CD8-positive, alpha-beta memory T cell (primary cell): ENCODE measurements at regions of chr12 and their contacts with region 1.

Region 1: DNA sequence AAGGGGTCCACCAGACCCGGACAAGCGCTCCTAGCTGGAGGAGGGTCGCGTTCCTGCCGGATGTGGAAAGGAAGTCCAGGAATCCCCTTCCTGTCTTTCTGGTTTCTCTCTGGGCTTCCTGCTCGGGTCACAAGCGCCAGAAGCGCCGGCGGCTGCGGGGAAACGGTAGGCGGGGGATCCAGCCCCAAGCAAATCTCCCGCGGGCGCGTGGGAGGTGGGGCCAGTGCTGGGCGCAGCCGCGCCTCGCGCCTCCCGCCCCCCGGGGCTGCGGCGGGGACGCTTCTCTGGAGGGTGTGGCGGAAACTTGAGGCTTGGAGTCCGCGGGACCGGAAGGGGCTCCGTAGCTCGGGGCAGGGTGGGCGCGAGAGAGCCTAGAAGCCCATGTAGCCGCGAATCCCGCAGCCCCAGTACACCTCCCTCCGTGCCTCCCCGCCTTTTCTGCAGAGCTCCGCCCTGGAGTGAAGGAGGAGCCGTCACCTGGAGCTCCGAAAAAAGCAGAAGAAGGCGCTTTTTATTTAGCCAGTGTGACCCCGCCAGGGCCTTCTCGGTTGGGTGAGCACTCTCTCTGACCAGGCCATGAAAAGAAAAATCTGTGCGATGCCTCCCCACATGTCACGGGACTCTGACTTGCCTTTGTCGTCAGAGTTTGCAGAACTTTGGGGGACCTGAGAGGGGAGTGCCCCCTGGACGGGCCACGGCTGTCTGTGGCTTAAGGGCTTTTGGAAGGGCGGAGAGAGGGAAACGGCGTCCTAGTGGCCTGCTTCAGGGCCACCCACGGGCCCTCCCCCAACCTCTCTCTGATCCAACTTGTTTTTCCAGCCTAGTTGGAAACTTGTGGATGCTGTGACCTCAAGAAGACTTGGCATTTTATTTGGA is 21.4 kb upstream of the CLEC2D start:
- DNase-seq: peak; percentile 86 to 97 (median 95)
- H3K4me3 ChIP-seq: peak overlapping the region; percentile 92
- H3K4me3 Mint-ChIP-seq: peak overlapping the region; percentile 85 to 99 (median 96)
- H3K27ac ChIP-seq: peak overlapping the region; percentile 93
- H3K27ac Mint-ChIP-seq: peak overlapping the region; percentile 90 to 99 (median 98)
- H3K4me1 ChIP-seq: peaks cover 50% of the 10 kb centered on the region
- H3K4me1 Mint-ChIP-seq: peaks cover 54 to 71% (median 69%) of the 10 kb centered on the region in 3 donors
- H3K27me3 ChIP-seq: no peaks in the 10 kb centered on the region
- H3K27me3 Mint-ChIP-seq: peaks cover 0 to 7% of the 10 kb centered on the region in 2 donors

Region 2: DNA sequence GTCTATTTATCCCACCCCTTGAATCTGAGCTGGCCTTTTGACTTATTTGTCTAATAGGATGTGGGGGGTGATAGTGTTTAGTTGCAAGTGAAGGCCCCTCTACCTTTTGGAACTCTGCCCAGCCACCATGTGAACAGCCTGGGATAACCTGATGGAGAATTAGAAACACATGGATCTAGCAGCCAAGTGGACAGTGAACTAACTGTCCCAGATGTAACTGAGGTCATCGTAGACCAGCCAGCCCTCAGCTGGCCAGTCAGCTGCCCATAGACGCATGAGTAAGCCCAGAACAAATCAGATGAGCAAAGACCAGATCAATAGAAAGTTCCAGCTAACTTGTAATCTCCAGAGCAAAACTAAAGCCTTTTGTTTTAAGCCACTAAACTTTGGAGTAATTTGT is 59.3 kb before region 1 on chr12:
- CTCF ChIA-PET with region 1: no interaction called
- POLR2A ChIA-PET with region 1: no interaction called
- DNase-seq: no peak
- H3K4me3 ChIP-seq: no peak overlapping the region
- H3K4me3 Mint-ChIP-seq: no peak overlapping the region
- H3K27ac ChIP-seq: no peak overlapping the region
- H3K27ac Mint-ChIP-seq: peak overlapping the region in 1 of 8 donors; percentile 17
- H3K4me1 ChIP-seq: no peaks in the 10 kb centered on the region
- H3K4me1 Mint-ChIP-seq: peaks cover 0 to 6% (median 2%) of the 10 kb centered on the region in 3 donors
- H3K27me3 ChIP-seq: no peaks in the 10 kb centered on the region
- H3K27me3 Mint-ChIP-seq: no peaks in the 10 kb centered on the region

Region 3: GRCh38 chr12:9634177-9634803 is 13.8 kb before region 1 on chr12:
- CTCF ChIA-PET with region 1: interaction called, 15 read pairs
- POLR2A ChIA-PET with region 1: interaction called, 7 read pairs
- DNase-seq: peak; percentile 64 to 80 (median 68)
- H3K4me3 ChIP-seq: peak overlapping the region; percentile 1
- H3K4me3 Mint-ChIP-seq: peak overlapping the region in 5 of 7 donors; percentile 18 to 63 (median 43)
- H3K27ac ChIP-seq: no peak overlapping the region
- H3K27ac Mint-ChIP-seq: peak overlapping the region; percentile 11 to 93 (median 88)
- H3K4me1 ChIP-seq: peaks cover 57% of the 10 kb centered on the region
- H3K4me1 Mint-ChIP-seq: peaks cover 44 to 83% (median 79%) of the 10 kb centered on the region in 3 donors
- H3K27me3 ChIP-seq: no peaks in the 10 kb centered on the region
- H3K27me3 Mint-ChIP-seq: peaks cover 0 to 2% of the 10 kb centered on the region in 2 donors

Region 4: GRCh38 chr12:9673404-9674225 is 25.6 kb after region 1 on chr12:
- CTCF ChIA-PET with region 1: interaction called, 20 read pairs
- POLR2A ChIA-PET with region 1: interaction called, 44 read pairs
- DNase-seq: peak; percentile 42 to 79 (median 55)
- H3K4me3 ChIP-seq: peak overlapping the region; percentile 66
- H3K4me3 Mint-ChIP-seq: peak overlapping the region; percentile 86 to 98 (median 92)
- H3K27ac ChIP-seq: peak overlapping the region; percentile 52
- H3K27ac Mint-ChIP-seq: peak overlapping the region; percentile 82 to 97 (median 94)
- H3K4me1 ChIP-seq: peaks cover 52% of the 10 kb centered on the region
- H3K4me1 Mint-ChIP-seq: peaks cover 66 to 88% (median 69%) of the 10 kb centered on the region in 3 donors
- H3K27me3 ChIP-seq: no peaks in the 10 kb centered on the region
- H3K27me3 Mint-ChIP-seq: peaks cover 0 to 1% of the 10 kb centered on the region in 2 donors

Region 5: DNA sequence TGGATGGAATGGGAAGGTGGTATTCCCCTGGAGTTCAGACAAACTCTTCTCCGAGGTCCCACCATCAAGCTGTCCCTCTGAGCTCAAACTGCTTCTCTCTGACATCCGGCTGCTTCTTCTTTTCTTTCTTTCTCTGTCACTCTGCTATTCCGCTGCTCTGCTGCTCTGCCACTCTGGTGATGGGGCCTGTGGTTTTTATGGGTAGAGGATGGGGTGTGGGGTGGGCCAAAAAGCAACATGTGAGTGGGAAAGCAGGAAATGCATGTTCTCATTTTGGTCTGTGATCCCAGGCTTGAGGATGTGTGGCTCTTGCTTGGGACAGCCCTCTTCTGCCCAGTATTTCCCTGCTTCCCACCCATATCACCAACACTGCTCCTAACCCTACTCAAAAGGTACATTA is 54.2 kb after region 1 on chr12:
- CTCF ChIA-PET with region 1: interaction called, 20 read pairs
- POLR2A ChIA-PET with region 1: interaction called, 17 read pairs
- DNase-seq: peak in 4 of 5 donors; percentile 28 to 76 (median 64)
- H3K4me3 ChIP-seq: peak overlapping the region; percentile 37
- H3K4me3 Mint-ChIP-seq: peak overlapping the region; percentile 68 to 88 (median 79)
- H3K27ac ChIP-seq: peak overlapping the region; percentile 33
- H3K27ac Mint-ChIP-seq: peak overlapping the region; percentile 78 to 98 (median 94)
- H3K4me1 ChIP-seq: peaks cover 62% of the 10 kb centered on the region
- H3K4me1 Mint-ChIP-seq: peaks cover 82 to 90% (median 87%) of the 10 kb centered on the region in 3 donors
- H3K27me3 ChIP-seq: no peaks in the 10 kb centered on the region
- H3K27me3 Mint-ChIP-seq: no peaks in the 10 kb centered on the region

Region 6: DNA sequence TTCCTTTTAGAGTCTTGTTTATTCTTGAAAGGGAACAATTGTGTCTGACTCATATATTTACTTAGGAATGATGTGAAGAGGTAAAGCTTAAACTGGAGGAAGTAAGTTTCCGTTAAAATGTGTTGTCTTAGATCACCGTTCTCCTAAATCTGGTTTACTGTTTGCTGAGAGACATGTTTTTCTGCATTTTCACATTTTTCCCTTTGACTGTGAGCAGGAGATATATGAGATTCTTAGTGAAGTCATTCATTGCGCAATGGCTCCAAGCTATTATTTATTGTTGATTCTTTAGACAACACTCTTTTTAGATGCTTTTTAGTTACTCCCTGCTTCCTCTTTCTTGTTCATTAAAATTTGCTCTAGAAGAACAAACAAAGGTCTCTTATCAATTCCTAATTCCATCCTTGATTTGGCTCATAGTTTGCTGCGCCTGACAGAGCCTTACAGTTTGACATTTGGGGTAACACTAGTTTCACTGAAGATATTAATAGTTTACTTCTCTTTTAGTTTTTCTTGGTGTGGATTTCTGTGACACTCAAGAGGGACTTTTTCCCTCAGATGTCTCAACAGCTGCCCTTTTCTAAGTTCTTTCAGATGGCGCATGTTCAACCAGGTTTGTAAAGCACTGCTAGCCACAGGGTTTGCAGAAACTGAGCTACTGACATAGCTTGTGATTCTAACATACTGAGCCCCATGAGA is 73.5 kb after region 1 on chr12:
- CTCF ChIA-PET with region 1: no interaction called
- POLR2A ChIA-PET with region 1: no interaction called
- DNase-seq: no peak
- H3K4me3 ChIP-seq: no peak overlapping the region
- H3K4me3 Mint-ChIP-seq: no peak overlapping the region
- H3K27ac ChIP-seq: no peak overlapping the region
- H3K27ac Mint-ChIP-seq: no peak overlapping the region
- H3K4me1 ChIP-seq: no peaks in the 10 kb centered on the region
- H3K4me1 Mint-ChIP-seq: peaks cover 0 to 5% (median 4%) of the 10 kb centered on the region in 3 donors
- H3K27me3 ChIP-seq: no peaks in the 10 kb centered on the region
- H3K27me3 Mint-ChIP-seq: peaks cover 3 to 16% of the 10 kb centered on the region in 2 donors

Region 7: DNA sequence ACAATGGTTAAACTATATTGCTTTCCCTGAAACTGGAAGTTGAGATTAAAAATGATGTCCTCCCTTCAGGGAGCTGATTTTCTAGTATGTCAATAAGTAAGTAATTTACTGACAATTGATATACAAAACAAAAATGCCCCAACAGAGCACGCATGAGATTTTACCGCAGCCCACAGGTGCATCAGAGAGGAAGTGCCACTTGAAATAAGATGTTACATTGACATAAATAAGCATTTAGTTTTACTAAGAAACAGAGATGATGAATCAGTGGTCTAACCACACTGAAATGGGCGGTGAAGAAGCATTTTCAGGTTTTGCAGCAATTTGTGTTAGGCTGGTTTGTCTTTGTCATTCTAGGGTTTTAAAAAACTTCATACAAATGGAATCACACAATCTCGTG is 93.7 kb after region 1 on chr12:
- CTCF ChIA-PET with region 1: interaction called, 15 read pairs
- POLR2A ChIA-PET with region 1: interaction called, 4 read pairs
- DNase-seq: peak; percentile 50 to 90 (median 89)
- H3K4me3 ChIP-seq: peak overlapping the region; percentile 33
- H3K4me3 Mint-ChIP-seq: peak overlapping the region; percentile 33 to 88 (median 82)
- H3K27ac ChIP-seq: peak overlapping the region; percentile 60
- H3K27ac Mint-ChIP-seq: peak overlapping the region; percentile 19 to 99 (median 97)
- H3K4me1 ChIP-seq: peaks cover 62% of the 10 kb centered on the region
- H3K4me1 Mint-ChIP-seq: peaks cover 53 to 80% (median 75%) of the 10 kb centered on the region in 3 donors
- H3K27me3 ChIP-seq: no peaks in the 10 kb centered on the region
- H3K27me3 Mint-ChIP-seq: no peaks in the 10 kb centered on the region